CD8-positive, alpha-beta T cell (primary cell): ENCODE measurements at regions of chr1 and their contacts with region 1.

Region 1: DNA sequence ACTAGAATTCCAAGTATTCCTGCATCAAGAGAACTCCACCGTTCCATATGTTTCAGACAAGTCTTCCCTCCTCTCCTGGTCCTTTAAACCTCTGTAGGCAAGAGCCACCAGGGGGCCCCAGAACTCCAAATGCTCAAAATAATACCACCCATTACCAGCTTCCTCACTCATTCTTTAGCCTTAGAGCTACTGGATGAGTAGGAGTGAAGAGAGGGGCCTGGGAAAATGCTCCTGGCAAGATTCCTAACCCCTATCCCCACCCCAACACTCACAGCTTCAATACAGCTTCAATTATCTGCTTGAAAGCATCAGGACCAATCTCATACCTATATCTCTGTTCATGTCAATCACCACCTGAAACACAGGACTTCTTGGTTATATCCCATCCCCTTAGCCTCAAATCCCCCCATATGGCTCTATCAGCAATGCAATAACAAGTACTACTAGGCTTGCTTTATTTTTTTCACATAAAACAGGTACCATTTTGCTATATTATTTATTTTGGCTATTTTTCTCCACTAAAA is 9.7 kb downstream of the TOR1AIP2 start:
- DNase-seq: peak; percentile 14 to 70 (median 58)
- ATAC-seq: peak; percentile 92
- H3K4me3 ChIP-seq: no peak overlapping the region
- H3K4me3 Mint-ChIP-seq: no peak overlapping the region
- H3K27ac ChIP-seq: peak overlapping the region in 1 of 2 experiments; percentile 14
- H3K27ac Mint-ChIP-seq: peak overlapping the region; percentile 2
- H3K4me1 ChIP-seq: no peaks in the 10 kb centered on the region
- H3K4me1 Mint-ChIP-seq: peaks cover 24% of the 10 kb centered on the region
- H3K27me3 ChIP-seq: no peaks in the 10 kb centered on the region
- H3K27me3 Mint-ChIP-seq: no peaks in the 10 kb centered on the region
- CTCF ChIP-seq: peak; percentile 69

Region 2: GRCh38 chr1:179882243-179883039 is 14.6 kb after region 1 on chr1 and contains the start of gene TOR1AIP1:
- CTCF ChIA-PET with region 1: interaction called, 11 read pairs
- POLR2A ChIA-PET with region 1: no interaction called
- intact Hi-C with region 1: loop called in 1 of 2 experiments (anchors 2 kb)
- DNase-seq: peak; percentile 95 to 99 (median 97)
- ATAC-seq: peak; percentile 74
- H3K4me3 ChIP-seq: peak within 1 kb of the TSS; percentile 91 to 95
- H3K4me3 Mint-ChIP-seq: peak within 1 kb of the TSS; percentile 94
- H3K27ac ChIP-seq: peak within 1 kb of the TSS; percentile 98 to 99
- H3K27ac Mint-ChIP-seq: peak within 1 kb of the TSS; percentile 100
- H3K4me1 ChIP-seq: peaks cover 37% of the 10 kb centered on the region
- H3K4me1 Mint-ChIP-seq: peaks cover 59% of the 10 kb centered on the region
- H3K27me3 ChIP-seq: no peaks in the 10 kb centered on the region
- H3K27me3 Mint-ChIP-seq: no peaks in the 10 kb centered on the region
- CTCF ChIP-seq: peak; percentile 41
- total RNA-seq, gene TOR1AIP1: 108 to 110 TPM

Region 3: GRCh38 chr1:180027949-180028445 is 160.1 kb after region 1 on chr1:
- CTCF ChIA-PET with region 1: interaction called, 6 read pairs
- POLR2A ChIA-PET with region 1: no interaction called
- intact Hi-C with region 1: loop called (anchors 2 to 10 kb)
- DNase-seq: no peak
- ATAC-seq: no peak
- H3K4me3 ChIP-seq: no peak overlapping the region
- H3K4me3 Mint-ChIP-seq: no peak overlapping the region
- H3K27ac ChIP-seq: no peak overlapping the region
- H3K27ac Mint-ChIP-seq: no peak overlapping the region
- H3K4me1 ChIP-seq: no peaks in the 10 kb centered on the region
- H3K4me1 Mint-ChIP-seq: peaks cover 2% of the 10 kb centered on the region
- H3K27me3 ChIP-seq: no peaks in the 10 kb centered on the region
- H3K27me3 Mint-ChIP-seq: no peaks in the 10 kb centered on the region
- CTCF ChIP-seq: no peak

Region 4: GRCh38 chr1:180033390-180033789 is 165.5 kb after region 1 on chr1:
- CTCF ChIA-PET with region 1: interaction called, 6 read pairs
- POLR2A ChIA-PET with region 1: no interaction called
- intact Hi-C with region 1: loop called (anchors 2 to 10 kb)
- DNase-seq: no peak
- ATAC-seq: no peak
- H3K4me3 ChIP-seq: no peak overlapping the region
- H3K4me3 Mint-ChIP-seq: no peak overlapping the region
- H3K27ac ChIP-seq: no peak overlapping the region
- H3K27ac Mint-ChIP-seq: no peak overlapping the region
- H3K4me1 ChIP-seq: no peaks in the 10 kb centered on the region
- H3K4me1 Mint-ChIP-seq: peaks cover 2% of the 10 kb centered on the region
- H3K27me3 ChIP-seq: no peaks in the 10 kb centered on the region
- H3K27me3 Mint-ChIP-seq: no peaks in the 10 kb centered on the region
- CTCF ChIP-seq: no peak